Endothelial cell of umbilical vein (primary cell): ENCODE measurements at regions of chr2 and their contacts with region 1.

Region 1: GRCh38 chr2:196750982-196751635 is 48.4 kb downstream of the GTF3C3 start:
- DNase-seq: peak; percentile 77
- H3K4me3 ChIP-seq: no peak overlapping the region
- H3K27ac ChIP-seq: no peak overlapping the region
- H3K4me1 ChIP-seq: no peaks in the 10 kb centered on the region
- H3K27me3 ChIP-seq: no peaks in the 10 kb centered on the region
- CTCF ChIP-seq: peak; percentile 80 to 90
- POLR2A ChIP-seq: no peak

Region 2: GRCh38 chr2:196291873-196292800 is 459.0 kb before region 1 on chr2:
- CTCF ChIA-PET with region 1: no interaction called
- POLR2A ChIA-PET with region 1: no interaction called
- dilution Hi-C with region 1: no loop called
- intact Hi-C with region 1: loop called (anchors 10 kb)
- DNase-seq: no peak
- H3K4me3 ChIP-seq: no peak overlapping the region
- H3K27ac ChIP-seq: no peak overlapping the region
- H3K4me1 ChIP-seq: peaks cover 27% of the 10 kb centered on the region
- H3K27me3 ChIP-seq: no peaks in the 10 kb centered on the region
- CTCF ChIP-seq: no peak
- POLR2A ChIP-seq: no peak

Region 3: DNA sequence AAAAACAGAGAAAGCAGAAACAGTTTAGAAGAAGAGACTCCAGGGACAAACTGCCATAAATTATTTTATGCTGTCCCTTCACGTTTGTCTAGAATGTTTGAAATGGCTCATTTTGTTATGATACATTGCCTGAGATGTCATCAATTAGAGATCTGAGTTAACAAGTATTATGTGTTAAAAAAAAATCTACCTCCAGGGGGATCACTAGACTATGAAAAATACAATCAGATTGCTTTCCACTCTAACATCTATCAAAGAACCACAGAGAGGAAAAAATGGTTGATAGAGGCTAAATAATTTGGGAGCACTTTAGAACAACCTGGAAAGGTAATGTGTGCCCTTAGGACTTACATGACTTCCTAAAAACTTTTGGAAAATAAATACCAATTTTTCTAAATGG is 215.4 kb before region 1 on chr2:
- CTCF ChIA-PET with region 1: interaction called, 3 read pairs
- POLR2A ChIA-PET with region 1: no interaction called
- dilution Hi-C with region 1: no loop called
- intact Hi-C with region 1: loop called (anchors 2 kb)
- DNase-seq: peak; percentile 10
- H3K4me3 ChIP-seq: no peak overlapping the region
- H3K27ac ChIP-seq: no peak overlapping the region
- H3K4me1 ChIP-seq: no peaks in the 10 kb centered on the region
- H3K27me3 ChIP-seq: peaks cover 7 to 27% of the 10 kb centered on the region in 2 experiments
- CTCF ChIP-seq: no peak
- POLR2A ChIP-seq: no peak

Region 4: DNA sequence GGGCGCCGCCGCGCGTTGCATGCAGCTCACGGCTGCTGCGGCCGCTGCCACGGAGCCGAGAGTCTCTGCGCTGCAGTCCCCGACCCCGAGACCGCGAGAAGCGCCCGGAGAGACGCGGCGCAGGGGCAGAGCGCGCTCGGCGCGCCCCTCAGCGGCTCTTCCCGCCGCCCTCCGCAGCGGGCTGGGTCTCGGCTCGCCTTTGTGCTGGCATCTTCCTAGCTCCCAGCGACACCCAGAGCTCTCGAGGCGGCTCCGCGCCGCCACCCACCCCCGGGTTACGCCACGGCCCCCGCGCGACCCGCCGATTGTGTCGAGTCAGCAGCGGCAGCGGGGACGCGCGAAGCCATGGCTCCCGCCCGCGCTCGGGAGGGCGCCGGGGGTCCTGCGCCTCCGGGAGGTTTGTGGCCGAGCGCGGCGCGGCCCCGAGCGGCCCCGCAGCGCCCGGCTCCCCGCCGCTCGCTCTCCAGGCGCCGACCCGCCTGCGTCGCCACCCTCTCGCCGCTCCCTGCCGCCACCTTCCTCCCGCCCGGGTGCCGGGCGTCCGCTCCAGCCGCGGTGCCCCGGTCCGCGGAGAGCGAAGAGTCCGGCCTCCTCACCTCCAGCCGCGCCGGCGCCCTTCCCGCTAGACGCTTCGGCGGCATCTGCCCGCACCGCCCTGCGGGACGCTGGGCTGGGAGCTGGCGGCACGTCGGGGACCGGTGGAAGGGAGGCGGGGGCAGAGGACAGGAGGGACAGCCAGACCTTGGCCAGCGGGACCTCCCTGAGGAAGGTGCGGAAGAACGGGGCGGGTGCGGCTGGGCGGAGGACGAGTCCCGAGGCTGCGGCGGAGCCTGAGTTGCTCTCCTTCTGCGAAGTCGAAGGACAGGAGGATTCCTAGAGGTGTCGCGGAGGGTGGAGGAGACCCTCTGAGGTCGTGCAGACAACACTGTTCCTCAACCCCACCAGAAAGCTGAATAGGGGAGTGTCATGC is 157.9 kb before region 1 on chr2:
- CTCF ChIA-PET with region 1: interaction called, 11 read pairs
- POLR2A ChIA-PET with region 1: no interaction called
- dilution Hi-C with region 1: no loop called
- intact Hi-C with region 1: loop called (anchors 2 kb)
- DNase-seq: peak; percentile 49
- H3K4me3 ChIP-seq: peak within 1 kb of the TSS; percentile 48 to 70 (median 55)
- H3K27ac ChIP-seq: peak within 1 kb of the TSS; percentile 23
- H3K4me1 ChIP-seq: peaks cover 13% of the 10 kb centered on the region
- H3K27me3 ChIP-seq: peaks cover 29 to 39% of the 10 kb centered on the region in 2 experiments
- CTCF ChIP-seq: peak in 1 of 2 donors; percentile 8
- POLR2A ChIP-seq: no peak

Region 5: GRCh38 chr2:196767101-196767500 is 16.0 kb after region 1 on chr2:
- CTCF ChIA-PET with region 1: interaction called, 18 read pairs
- POLR2A ChIA-PET with region 1: interaction called, 4 read pairs
- dilution Hi-C with region 1: no loop called
- intact Hi-C with region 1: no loop called
- DNase-seq: no peak
- H3K4me3 ChIP-seq: no peak overlapping the region
- H3K27ac ChIP-seq: no peak overlapping the region
- H3K4me1 ChIP-seq: no peaks in the 10 kb centered on the region
- H3K27me3 ChIP-seq: no peaks in the 10 kb centered on the region
- CTCF ChIP-seq: no peak
- POLR2A ChIP-seq: no peak

Region 6: GRCh38 chr2:196914867-196915460 is 163.9 kb after region 1 on chr2:
- CTCF ChIA-PET with region 1: no interaction called
- POLR2A ChIA-PET with region 1: no interaction called
- dilution Hi-C with region 1: no loop called
- intact Hi-C with region 1: no loop called
- DNase-seq: no peak
- H3K4me3 ChIP-seq: no peak overlapping the region
- H3K27ac ChIP-seq: no peak overlapping the region
- H3K4me1 ChIP-seq: peaks cover 19% of the 10 kb centered on the region
- H3K27me3 ChIP-seq: no peaks in the 10 kb centered on the region
- CTCF ChIP-seq: no peak
- POLR2A ChIP-seq: no peak

Region 7: DNA sequence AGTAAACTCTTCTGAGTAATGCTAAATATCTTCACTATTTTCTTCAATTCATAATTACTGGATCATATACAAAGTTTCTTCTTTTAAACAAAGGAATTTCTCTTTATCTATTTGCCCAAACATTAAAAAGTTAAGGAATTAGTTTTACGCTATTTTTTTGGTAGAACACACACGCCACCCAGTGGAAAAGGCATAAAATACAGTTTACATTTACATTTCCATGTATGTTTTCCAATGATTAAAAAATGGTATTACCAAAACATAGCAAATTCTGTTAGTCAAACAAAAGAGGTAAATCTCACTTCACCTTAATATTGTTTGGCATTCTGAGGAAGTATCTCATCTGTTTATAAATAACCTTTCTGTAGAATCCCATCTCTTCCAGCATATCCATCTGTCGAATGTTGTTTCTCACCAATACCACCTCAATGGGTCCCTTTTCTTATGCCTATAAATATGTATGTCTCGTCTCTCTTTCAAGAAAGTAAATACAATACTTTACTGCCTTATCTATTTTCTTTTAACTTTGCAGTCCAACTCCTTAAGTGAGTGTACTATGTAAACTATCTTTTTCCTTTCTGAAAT is 1026.8 kb after region 1 on chr2:
- CTCF ChIA-PET with region 1: no interaction called
- POLR2A ChIA-PET with region 1: no interaction called
- dilution Hi-C with region 1: no loop called
- intact Hi-C with region 1: loop called (anchors 10 kb)
- DNase-seq: peak; percentile 58
- H3K4me3 ChIP-seq: no peak overlapping the region
- H3K27ac ChIP-seq: no peak overlapping the region
- H3K4me1 ChIP-seq: no peaks in the 10 kb centered on the region
- H3K27me3 ChIP-seq: no peaks in the 10 kb centered on the region
- CTCF ChIP-seq: peak; percentile 28 to 32
- POLR2A ChIP-seq: no peak